AG04449 (cell line): ENCODE measurements at regions of chr1 and their contacts with region 1.

Region 1: GRCh38 chr1:22704440-22705067 is 6.1 kb upstream of the EPHB2 start:
- DNase-seq: peak; percentile 24
- H3K4me3 ChIP-seq: no peak overlapping the region
- CTCF ChIP-seq: peak; percentile 88

Region 2: DNA sequence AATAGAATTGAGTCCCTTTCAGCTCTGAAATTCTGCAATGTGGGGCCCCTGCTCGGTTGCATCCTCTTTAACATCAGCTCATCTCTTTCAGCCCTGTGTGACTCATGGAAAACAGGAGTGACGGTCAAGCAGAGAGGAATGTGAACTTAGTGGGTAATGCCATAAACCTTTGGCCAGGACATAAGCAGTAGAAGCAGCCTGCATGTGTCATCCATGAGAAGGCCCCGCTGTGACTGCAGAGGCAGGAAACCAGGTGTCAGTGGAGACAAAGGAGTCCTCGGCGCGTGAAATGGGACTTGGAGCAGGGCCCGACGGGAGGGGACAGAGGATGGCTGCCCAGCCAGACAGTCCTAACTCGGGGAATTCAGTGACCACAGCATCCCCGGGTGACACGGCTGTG is 15.0 kb before region 1 on chr1:
- CTCF ChIA-PET with region 1: interaction called, 48 read pairs
- POLR2A ChIA-PET with region 1: no interaction called
- DNase-seq: peak; percentile 61
- H3K4me3 ChIP-seq: no peak overlapping the region
- CTCF ChIP-seq: no peak

Region 3: DNA sequence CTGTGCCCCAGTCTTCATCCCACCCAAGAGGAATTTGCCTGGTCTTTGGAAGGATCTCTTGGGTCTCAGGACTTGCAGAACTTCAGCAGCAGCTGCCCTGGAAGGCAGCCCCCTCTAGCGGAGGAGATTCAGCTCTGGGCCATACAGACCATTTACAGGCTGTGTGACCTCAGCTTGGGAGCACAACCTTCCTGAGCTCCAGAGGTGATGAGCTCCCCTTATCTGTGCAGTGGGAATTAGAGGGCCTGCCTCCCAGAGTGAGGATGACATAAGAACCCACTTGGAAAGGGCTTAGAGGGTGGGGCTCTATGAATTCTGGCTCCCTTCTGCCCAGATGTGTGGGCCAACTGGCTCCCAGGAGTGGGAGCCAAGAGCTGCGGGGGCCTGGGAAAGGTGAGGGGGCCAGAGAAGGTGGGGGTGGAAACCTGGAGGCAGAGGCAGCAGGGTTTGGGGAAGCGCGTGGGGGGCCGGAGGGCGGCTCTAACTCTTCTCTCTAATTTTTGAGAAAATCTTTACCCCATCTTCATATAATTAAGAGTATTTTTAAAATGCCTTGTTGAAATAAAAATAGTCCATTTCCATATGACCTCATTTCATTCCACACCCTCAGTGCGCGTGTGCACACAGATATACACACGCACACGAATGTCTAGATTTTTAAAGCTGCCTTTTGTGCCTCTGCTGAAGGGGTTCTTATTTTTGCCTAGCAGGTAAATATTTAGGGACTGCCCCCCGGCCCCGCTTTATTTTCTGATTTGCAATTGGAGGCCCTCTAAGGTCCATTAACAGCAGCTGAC is 27.6 kb after region 1 on chr1:
- CTCF ChIA-PET with region 1: interaction called, 20 read pairs
- POLR2A ChIA-PET with region 1: no interaction called
- DNase-seq: no peak
- H3K4me3 ChIP-seq: no peak overlapping the region
- CTCF ChIP-seq: peak; percentile 36

Region 4: GRCh38 chr1:22835636-22836319 is 131.2 kb after region 1 on chr1:
- CTCF ChIA-PET with region 1: interaction called, 21 read pairs
- POLR2A ChIA-PET with region 1: no interaction called
- DNase-seq: no peak
- H3K4me3 ChIP-seq: no peak overlapping the region
- CTCF ChIP-seq: no peak

Region 5: GRCh38 chr1:22870201-22870871 is 165.8 kb after region 1 on chr1:
- CTCF ChIA-PET with region 1: interaction called, 217 read pairs
- POLR2A ChIA-PET with region 1: no interaction called
- DNase-seq: no peak
- H3K4me3 ChIP-seq: no peak overlapping the region
- CTCF ChIP-seq: no peak

Region 6: GRCh38 chr1:22903113-22903512 is 198.6 kb after region 1 on chr1:
- CTCF ChIA-PET with region 1: interaction called, 11 read pairs
- POLR2A ChIA-PET with region 1: no interaction called
- DNase-seq: no peak
- H3K4me3 ChIP-seq: no peak overlapping the region
- CTCF ChIP-seq: no peak

Region 7: DNA sequence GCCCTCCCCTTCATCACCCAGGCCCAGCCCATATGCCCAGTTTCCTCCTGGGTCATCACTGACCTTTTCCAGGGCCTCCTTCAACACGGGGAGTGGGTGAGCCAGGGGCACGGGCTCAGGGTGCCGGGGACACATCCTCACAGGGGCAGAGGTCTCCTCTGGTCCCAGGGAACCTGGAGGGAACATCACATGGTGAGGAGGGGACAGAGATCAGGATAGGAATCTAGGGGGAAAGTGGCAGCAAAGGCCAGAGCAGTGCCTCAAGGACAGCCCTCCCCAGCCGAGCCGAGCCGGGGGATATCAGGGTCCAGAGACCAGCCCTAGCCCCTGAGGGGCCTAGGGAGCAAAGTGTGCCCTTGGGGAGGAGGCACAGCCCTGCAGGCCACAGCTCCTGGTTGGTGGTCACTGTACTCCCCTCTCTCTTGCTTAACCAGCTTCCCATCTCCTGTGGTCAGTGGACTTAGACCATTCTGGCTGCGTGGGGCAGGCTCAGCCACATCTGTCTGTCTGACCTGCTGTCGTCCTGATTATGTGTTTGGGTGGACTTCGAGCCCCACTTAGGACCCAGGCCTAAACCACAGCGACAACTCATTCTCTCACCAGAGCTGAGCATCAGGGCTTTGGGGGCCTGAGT is 258.6 kb after region 1 on chr1:
- CTCF ChIA-PET with region 1: interaction called, 30 read pairs
- POLR2A ChIA-PET with region 1: no interaction called
- DNase-seq: no peak
- H3K4me3 ChIP-seq: no peak overlapping the region
- CTCF ChIP-seq: no peak